PC-9 (cell line): ENCODE measurements at regions of chr5 and their contacts with region 1.

Region 1: DNA sequence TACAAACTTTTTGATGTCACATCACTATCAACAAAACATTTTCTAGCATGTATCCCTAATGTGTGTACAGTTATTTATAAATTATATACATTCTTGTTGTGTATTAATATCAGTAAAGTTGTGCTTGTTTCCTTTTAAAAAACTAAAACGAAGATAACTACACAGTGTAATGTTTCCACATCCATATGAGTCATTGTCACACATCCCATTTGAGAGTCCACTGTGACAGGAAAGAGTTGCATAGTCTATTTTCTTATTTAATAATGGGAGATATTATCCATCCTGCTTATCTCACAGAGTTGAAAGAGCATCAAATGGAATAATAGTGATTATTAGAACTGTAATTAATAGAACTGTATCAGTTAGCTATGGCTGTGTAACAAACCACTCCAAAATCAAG is 434.0 kb upstream of the CLINT1 start:
- DNase-seq: no peak
- H3K4me3 ChIP-seq: no peak overlapping the region
- H3K27ac ChIP-seq: no peak overlapping the region
- H3K4me1 ChIP-seq: no peaks in the 10 kb centered on the region
- H3K27me3 ChIP-seq: no peaks in the 10 kb centered on the region
- CTCF ChIP-seq: no peak

Region 2: DNA sequence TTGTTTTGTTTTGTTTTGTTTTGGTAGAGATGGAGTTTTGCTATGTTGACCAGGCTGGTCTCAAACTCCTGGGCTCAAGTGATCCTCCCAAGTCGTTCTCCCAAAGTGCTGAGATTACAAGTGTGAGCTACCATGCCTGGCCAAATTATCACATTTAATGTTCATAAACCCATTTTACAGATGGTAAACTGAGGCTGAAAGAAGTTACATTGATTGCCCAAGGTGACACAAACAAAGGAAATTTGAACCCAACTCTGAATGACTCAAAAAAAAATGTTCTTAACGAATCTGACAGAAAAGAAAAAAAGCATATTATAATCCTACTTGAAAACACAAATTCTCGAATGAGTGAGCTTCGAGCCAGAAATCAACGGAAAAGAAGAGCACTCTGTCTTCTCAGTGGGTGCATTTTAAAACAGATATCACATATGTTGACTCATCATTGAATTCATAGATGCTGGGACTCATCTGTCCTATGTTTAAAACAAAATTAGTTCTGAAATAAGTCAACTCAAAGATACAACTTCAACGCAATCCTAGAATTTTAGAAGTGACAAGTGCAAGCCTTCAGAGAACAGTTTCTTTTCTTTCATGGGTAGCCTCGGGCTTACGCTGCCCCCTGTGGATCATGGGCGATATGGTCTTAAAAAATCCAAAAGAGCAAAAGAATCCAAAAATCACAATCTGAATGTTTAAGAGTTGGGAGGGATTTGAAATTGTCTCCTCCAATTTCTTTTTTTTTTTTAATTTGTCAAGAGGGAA is 1358.3 kb before region 1 on chr5:
- CTCF ChIA-PET with region 1: no interaction called
- POLR2A ChIA-PET with region 1: no interaction called
- intact Hi-C with region 1: no loop called
- DNase-seq: no peak
- H3K4me3 ChIP-seq: no peak overlapping the region
- H3K27ac ChIP-seq: no peak overlapping the region
- H3K4me1 ChIP-seq: no peaks in the 10 kb centered on the region
- H3K27me3 ChIP-seq: peaks cover 10% of the 10 kb centered on the region; the same call in 1 of the 2 replicates
- CTCF ChIP-seq: no peak; the same call in 1 of the 2 replicates

Region 3: GRCh38 chr5:158320178-158320674 is 27.2 kb after region 1 on chr5:
- CTCF ChIA-PET with region 1: interaction called, 10 read pairs
- POLR2A ChIA-PET with region 1: no interaction called
- intact Hi-C with region 1: no loop called
- DNase-seq: no peak
- H3K4me3 ChIP-seq: no peak overlapping the region
- H3K27ac ChIP-seq: no peak overlapping the region
- H3K4me1 ChIP-seq: no peaks in the 10 kb centered on the region
- H3K27me3 ChIP-seq: 0 out of 2 replicates have a peak, but pooled peaks cover 4% of the 10 kb centered on the region
- CTCF ChIP-seq: no peak